Lower lobe of right lung (tissue), 2 donors: ENCODE measurements at regions of chr11 and their contacts with region 1.

Region 1: GRCh38 chr11:59207988-59208451 is 4.7 kb downstream of the MPEG1 start:
- DNase-seq: no peak
- ATAC-seq: peak; percentile 61 to 74
- H3K4me3 ChIP-seq: peak overlapping the region; percentile 44
- H3K27ac ChIP-seq: peak overlapping the region; percentile 5
- H3K4me1 ChIP-seq: peaks cover 24% of the 10 kb centered on the region
- H3K27me3 ChIP-seq: no peaks in the 10 kb centered on the region
- CTCF ChIP-seq: peak; percentile 65

Region 2: GRCh38 chr11:59171508-59172322 is 36.3 kb before region 1 on chr11 and contains the start of gene DTX4:
- intact Hi-C with region 1: loop called (anchors 5 kb)
- DNase-seq: peak; percentile 97
- ATAC-seq: peak; percentile 90 to 94
- H3K4me3 ChIP-seq: peak within 1 kb of the TSS; percentile 75
- H3K27ac ChIP-seq: peak within 1 kb of the TSS; percentile 79
- H3K4me1 ChIP-seq: peaks cover 36% of the 10 kb centered on the region
- H3K27me3 ChIP-seq: no peaks in the 10 kb centered on the region
- CTCF ChIP-seq: peak; percentile 86
- total RNA-seq, gene DTX4: 51.7 TPM